Endothelial cell of umbilical vein (primary cell): ENCODE measurements at regions of chr11 and their contacts with region 1.

Region 1: DNA sequence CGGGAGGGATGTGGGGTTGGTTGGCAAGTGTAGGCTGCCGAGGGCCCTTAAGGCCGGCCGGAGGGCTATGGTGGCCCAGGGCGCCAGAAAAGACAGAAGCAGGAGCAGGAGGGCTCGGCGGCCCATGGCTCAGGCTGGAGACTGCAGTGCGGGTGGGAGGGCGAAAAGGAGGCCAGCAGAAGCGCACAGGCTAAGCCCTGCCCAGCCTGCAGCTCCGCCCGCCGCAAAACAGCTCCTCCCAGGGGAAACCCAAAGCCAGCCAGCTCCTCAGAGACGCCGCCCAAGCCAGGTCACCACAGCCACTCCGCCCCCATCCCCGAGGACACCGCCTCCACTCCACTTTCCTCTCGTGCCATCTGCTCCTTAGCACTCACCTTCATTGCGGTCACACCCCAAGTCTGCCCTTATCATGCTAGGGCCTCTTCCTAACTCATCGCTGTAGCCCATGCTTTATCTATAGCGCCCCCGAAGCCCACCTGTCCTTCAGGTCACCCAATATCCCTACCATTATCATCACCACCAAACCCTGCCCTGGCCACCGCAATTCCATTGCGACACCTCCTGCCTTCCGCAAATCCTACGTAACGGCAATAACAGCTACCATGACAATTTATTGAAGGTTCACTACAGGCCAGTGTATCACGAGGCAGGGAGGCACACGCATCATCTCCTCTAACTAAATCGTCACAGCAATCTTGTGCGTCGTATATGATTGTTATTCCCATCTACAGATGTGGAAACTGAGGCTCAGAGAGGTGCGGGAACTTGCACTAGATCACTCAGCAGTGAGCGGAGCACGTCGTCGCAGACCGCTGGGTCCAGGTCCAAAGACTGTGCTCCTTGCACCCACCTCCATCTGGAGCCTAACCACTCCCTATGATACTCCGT is at the start of gene PRCP:
- DNase-seq: peak; percentile 91
- H3K4me3 ChIP-seq: peak within 1 kb of the TSS; percentile 34 to 75 (median 50)
- H3K27ac ChIP-seq: peak within 1 kb of the TSS; percentile 52
- H3K4me1 ChIP-seq: peaks cover 32% of the 10 kb centered on the region
- H3K27me3 ChIP-seq: no peaks in the 10 kb centered on the region
- CTCF ChIP-seq: no peak
- POLR2A ChIP-seq: peak; percentile 96
- total RNA-seq, gene PRCP: 149 and 170 TPM in 2 replicates

Region 2: GRCh38 chr11:82718307-82718706 is 182.2 kb before region 1 on chr11:
- CTCF ChIA-PET with region 1: interaction called, 8 read pairs
- POLR2A ChIA-PET with region 1: no interaction called
- dilution Hi-C with region 1: no loop called
- intact Hi-C with region 1: loop called (anchors 1 kb)
- DNase-seq: peak; percentile 34
- H3K4me3 ChIP-seq: no peak overlapping the region
- H3K27ac ChIP-seq: no peak overlapping the region
- H3K4me1 ChIP-seq: no peaks in the 10 kb centered on the region
- H3K27me3 ChIP-seq: peaks cover 10 to 13% of the 10 kb centered on the region in 2 experiments
- CTCF ChIP-seq: peak; percentile 61 to 72
- POLR2A ChIP-seq: no peak

Region 3: DNA sequence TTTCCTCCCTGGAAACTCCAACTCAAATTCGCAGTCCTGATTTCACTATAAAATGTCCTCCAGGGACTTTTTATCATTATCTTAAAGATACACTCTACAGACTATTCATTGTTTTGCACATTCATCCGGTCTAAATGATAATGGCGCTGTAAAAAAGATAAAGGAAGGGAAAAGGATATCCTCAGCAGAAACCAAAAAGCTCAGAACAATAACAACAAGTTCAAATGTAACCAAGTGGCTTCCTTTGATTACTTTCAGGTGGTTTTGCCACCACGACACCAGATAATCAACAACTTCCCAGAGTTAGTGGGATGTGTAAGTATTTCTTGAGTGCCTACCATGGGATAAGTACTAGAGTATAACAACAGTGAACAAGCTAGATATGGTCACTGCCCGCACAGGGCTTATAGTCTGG is 26.6 kb before region 1 on chr11:
- CTCF ChIA-PET with region 1: interaction called, 191 read pairs
- POLR2A ChIA-PET with region 1: no interaction called
- dilution Hi-C with region 1: no loop called
- intact Hi-C with region 1: loop called (anchors 1 kb)
- DNase-seq: peak; percentile 74
- H3K4me3 ChIP-seq: no peak overlapping the region
- H3K27ac ChIP-seq: no peak overlapping the region
- H3K4me1 ChIP-seq: peaks cover 23% of the 10 kb centered on the region
- H3K27me3 ChIP-seq: no peaks in the 10 kb centered on the region
- CTCF ChIP-seq: no peak
- POLR2A ChIP-seq: peak; percentile 41

Region 4: DNA sequence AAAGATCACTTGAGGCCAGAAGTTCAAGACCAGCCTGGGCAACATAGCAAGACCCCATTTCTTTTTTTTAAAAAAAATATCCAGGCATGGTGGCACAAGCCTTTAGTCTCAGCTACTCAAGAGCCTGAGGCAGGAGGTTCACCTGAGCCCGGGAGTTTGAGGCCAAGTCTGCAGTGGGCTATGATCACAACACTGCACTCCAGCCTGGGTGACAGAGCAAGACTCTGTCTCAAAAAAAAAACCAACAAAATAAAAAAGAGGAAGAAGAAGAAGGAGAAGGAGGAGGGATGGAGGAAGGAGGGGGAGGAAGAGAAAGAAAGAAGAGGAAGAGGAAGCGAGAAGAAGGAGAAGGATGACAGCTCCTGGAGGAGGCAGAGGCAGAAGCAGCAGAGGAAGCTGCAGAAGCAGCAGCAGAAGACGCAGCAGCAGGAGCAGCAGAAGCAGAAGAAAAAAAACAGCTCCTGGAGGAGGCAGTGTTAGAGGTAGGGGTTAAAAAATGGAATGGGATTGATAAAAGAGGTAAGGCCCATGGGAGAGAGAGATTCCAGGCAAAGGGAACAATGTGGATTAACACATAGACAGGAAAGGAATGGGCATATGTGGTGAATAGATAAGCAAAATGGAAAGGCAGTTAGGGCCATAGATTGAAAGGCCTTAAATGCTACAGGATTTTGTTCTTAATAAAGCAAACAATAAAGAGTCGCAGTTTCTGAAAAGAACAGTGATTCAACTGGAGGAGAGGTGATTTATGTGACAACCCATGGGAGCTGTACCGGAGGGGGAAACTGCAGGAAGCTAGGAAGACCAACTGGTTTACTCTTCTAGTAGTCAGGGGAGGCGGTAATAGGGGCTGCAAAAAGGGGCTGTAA is 11.2 kb before region 1 on chr11:
- CTCF ChIA-PET with region 1: interaction called, 20 read pairs
- POLR2A ChIA-PET with region 1: interaction called, 6 read pairs
- dilution Hi-C with region 1: no loop called
- intact Hi-C with region 1: loop called (anchors 1 kb)
- DNase-seq: peak; percentile 96
- H3K4me3 ChIP-seq: no peak overlapping the region
- H3K27ac ChIP-seq: peak overlapping the region; percentile 63
- H3K4me1 ChIP-seq: peaks cover 51% of the 10 kb centered on the region
- H3K27me3 ChIP-seq: no peaks in the 10 kb centered on the region
- CTCF ChIP-seq: no peak
- POLR2A ChIP-seq: peak; percentile 73

Region 5: GRCh38 chr11:83071567-83072349 is 171.2 kb after region 1 on chr11 and contains the start of gene RAB30:
- CTCF ChIA-PET with region 1: no interaction called
- POLR2A ChIA-PET with region 1: no interaction called
- dilution Hi-C with region 1: no loop called
- intact Hi-C with region 1: loop called (anchors 1 kb)
- DNase-seq: peak; percentile 100
- H3K4me3 ChIP-seq: peak within 1 kb of the TSS; percentile 78 to 96 (median 93)
- H3K27ac ChIP-seq: peak within 1 kb of the TSS; percentile 75
- H3K4me1 ChIP-seq: peaks cover 36% of the 10 kb centered on the region
- H3K27me3 ChIP-seq: no peaks in the 10 kb centered on the region
- CTCF ChIP-seq: no peak
- POLR2A ChIP-seq: peak; percentile 97
- total RNA-seq, gene RAB30: 14.6 and 18.4 TPM in 2 replicates

Region 6: GRCh38 chr11:83249972-83250593 is 349.6 kb after region 1 on chr11:
- CTCF ChIA-PET with region 1: interaction called, 27 read pairs
- POLR2A ChIA-PET with region 1: no interaction called
- dilution Hi-C with region 1: no loop called
- intact Hi-C with region 1: no loop called
- DNase-seq: peak; percentile 46
- H3K4me3 ChIP-seq: no peak overlapping the region
- H3K27ac ChIP-seq: no peak overlapping the region
- H3K4me1 ChIP-seq: no peaks in the 10 kb centered on the region
- H3K27me3 ChIP-seq: no peaks in the 10 kb centered on the region
- CTCF ChIP-seq: peak; percentile 35 to 53
- POLR2A ChIP-seq: no peak

Region 7: GRCh38 chr11:83819933-83820549 is 919.5 kb after region 1 on chr11:
- CTCF ChIA-PET with region 1: no interaction called
- POLR2A ChIA-PET with region 1: no interaction called
- dilution Hi-C with region 1: no loop called
- intact Hi-C with region 1: loop called (anchors 1 kb)
- DNase-seq: peak; percentile 65
- H3K4me3 ChIP-seq: no peak overlapping the region
- H3K27ac ChIP-seq: no peak overlapping the region
- H3K4me1 ChIP-seq: no peaks in the 10 kb centered on the region
- H3K27me3 ChIP-seq: peaks cover 0 to 2% of the 10 kb centered on the region in 2 experiments
- CTCF ChIP-seq: peak; percentile 18 to 23
- POLR2A ChIP-seq: no peak